ENCODE measurements at regions of chrX and their contacts with region 1.

Region 1: DNA sequence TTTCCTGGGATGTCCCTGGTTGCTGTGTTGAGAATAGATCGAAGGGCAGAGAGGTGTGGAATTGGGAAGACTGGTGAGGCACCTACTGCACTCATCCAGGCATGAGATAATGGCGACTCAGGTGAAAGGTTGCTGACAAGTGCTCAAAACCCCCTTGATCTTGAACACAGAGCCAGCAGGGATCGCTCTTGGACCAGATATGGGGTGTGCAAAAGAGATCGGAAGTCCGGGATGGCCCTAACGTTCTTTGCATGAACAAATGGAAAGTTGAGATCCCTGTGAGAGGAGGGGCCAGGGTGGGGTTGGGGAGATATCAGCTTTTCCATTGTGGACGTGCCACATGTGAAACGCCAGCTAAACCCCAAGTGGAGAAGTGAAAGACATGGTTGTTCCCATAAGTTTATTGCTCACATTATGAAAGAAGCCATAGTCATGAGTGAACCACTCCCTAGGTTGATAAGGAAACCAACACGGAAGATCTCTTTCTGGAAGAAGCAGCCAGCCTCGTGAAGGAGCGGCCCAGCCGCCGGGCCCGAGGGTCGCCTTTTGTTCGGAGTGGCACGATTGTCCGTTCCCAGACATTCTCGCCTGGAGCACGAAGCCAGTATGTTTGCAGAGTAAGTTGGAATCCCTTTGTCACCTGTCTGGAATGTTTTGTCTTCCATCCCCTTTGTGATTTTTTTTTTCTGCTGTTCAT is 22.6 kb upstream of the CLCN4 start:
- DNase-seq: peak; percentile 67 to 68
- H3K4me3 ChIP-seq: no peak overlapping the region; the same call in 1 of the 2 replicates
- H3K4me3 Mint-ChIP-seq: peak overlapping the region; percentile 50
- H3K27ac Mint-ChIP-seq: peak overlapping the region; percentile 91
- H3K4me1 ChIP-seq: peaks cover 16% of the 10 kb centered on the region
- H3K4me1 Mint-ChIP-seq: no peaks in the 10 kb centered on the region
- H3K27me3 ChIP-seq: no peaks in the 10 kb centered on the region
- H3K27me3 Mint-ChIP-seq: no peaks in the 10 kb centered on the region
- CTCF ChIP-seq: no peak

Region 2: DNA sequence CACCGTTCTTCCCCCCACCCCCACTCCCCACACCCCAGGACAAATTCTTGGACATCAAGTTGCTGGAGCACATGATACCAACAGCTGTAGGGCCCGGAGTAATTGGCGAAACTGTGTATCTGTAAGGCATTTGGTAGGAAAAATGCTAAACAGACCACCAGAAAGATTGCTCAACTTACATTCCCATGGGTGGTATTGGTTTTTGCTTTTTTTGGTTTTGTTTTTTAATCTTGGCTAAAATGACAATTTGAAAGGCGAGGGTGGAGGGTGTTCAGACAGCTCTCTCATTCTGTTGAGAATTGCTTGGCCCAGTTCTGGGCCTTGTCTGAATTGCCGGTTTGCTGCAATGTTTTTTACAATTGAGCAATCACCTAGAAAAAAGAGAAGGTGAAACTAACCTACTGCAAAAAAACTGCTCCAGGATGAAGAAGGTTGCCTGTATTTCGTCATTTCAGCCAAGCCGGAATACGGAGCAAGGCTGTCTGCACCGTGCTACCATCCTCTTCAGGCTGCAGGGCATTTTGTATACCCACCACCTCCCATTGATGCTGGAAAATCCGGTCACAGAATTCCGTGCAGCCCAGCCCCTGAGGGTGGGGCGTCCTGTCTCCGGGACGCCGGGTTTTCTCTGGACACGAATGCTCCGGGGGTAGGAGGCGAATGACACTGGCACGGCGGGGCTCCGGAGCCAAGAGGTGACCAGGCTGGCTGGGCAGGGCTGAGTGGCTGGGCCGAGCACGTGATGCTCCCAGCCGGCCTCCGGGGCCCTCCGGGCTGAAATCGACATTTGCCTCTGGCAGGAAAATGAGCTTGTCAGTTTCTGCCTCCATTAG is 22.3 kb after region 1 on chrX and contains the start of gene CLCN4:
- CTCF ChIA-PET with region 1: no interaction called
- POLR2A ChIA-PET with region 1: interaction called, 5 read pairs
- intact Hi-C with region 1: loop called (anchors 1 kb)
- DNase-seq: peak; percentile 78 to 79
- H3K4me3 ChIP-seq: peak within 1 kb of the TSS; percentile 26
- H3K4me3 Mint-ChIP-seq: peak within 1 kb of the TSS; percentile 70
- H3K27ac Mint-ChIP-seq: peak within 1 kb of the TSS; percentile 76
- H3K4me1 ChIP-seq: peaks cover 8% of the 10 kb centered on the region; the same call in 1 of the 2 replicates
- H3K4me1 Mint-ChIP-seq: peaks cover 12% of the 10 kb centered on the region
- H3K27me3 ChIP-seq: no peaks in the 10 kb centered on the region
- H3K27me3 Mint-ChIP-seq: no peaks in the 10 kb centered on the region
- CTCF ChIP-seq: no peak
- total RNA-seq, gene CLCN4: 10.0 and 11.1 TPM in 2 replicates

Measured in Caco-2 (cell line).